GM12878 (cell line): ENCODE measurements at regions of chr9 and their contacts with region 1.

Region 1: GRCh38 chr9:128552153-128552743 is at the start of gene SPTAN1:
- DNase-seq: peak; percentile 60
- ATAC-seq: peak; percentile 85
- H3K4me3 ChIP-seq: peak within 1 kb of the TSS; percentile 92
- H3K27ac ChIP-seq: peak within 1 kb of the TSS; percentile 60
- H3K4me1 ChIP-seq: peaks cover 23% of the 10 kb centered on the region
- H3K27me3 ChIP-seq: no peaks in the 10 kb centered on the region
- CTCF ChIP-seq: peak in 1 of 3 experiments; percentile 20; a peak in 1 of 6 replicates
- EP300 ChIP-seq: no peak
- POLR2A ChIP-seq: peak; percentile 99
- RAD21 ChIP-seq: no peak
- polyA plus RNA-seq, gene SPTAN1: 18.7 to 46.9 TPM

Region 2: DNA sequence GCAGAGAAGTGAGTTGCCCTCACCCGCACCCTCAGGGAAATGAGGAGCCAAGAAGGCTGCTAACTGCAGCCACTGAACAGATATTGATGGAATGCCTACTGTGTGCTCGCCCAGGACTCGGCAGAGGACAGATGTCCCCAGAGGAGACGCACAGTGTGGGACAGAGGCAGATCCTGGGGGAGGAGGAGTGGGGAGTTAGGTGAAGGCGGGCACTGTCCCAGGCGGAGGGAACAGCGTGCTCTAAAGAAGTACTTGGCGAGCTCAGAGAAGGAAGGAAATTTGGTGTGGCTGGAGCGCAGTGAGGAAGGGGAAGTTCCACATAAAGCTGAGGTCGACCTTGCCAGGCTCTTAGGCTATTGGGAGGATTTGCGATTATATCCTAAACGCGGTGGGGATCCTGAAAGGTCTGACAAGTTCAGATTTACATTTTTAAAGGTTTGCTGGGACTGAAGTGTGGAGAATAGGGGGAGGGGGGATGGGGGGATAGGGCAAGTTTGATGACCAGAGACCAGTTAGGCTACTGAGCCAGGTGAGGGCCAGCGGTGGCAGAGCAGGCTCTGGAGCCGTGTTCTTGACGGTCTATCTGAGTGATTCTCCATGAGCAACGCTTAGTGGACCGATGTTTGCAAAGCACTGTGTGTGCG is 155.2 kb before region 1 on chr9:
- CTCF ChIA-PET with region 1: no interaction called
- POLR2A ChIA-PET with region 1: no interaction called
- RAD21 ChIA-PET with region 1: no interaction called
- SMC1A ChIA-PET with region 1: no interaction called
- in situ Hi-C with region 1: no loop called
- intact Hi-C with region 1: no loop called
- DNase-seq: no peak
- ATAC-seq: no peak; the same call in 2 of the 3 replicates
- H3K4me3 ChIP-seq: no peak overlapping the region
- H3K27ac ChIP-seq: no peak overlapping the region
- H3K4me1 ChIP-seq: no peaks in the 10 kb centered on the region
- H3K27me3 ChIP-seq: no peaks in the 10 kb centered on the region; a peak in 1 of 4 replicates
- CTCF ChIP-seq: no peak
- EP300 ChIP-seq: no peak
- POLR2A ChIP-seq: no peak
- RAD21 ChIP-seq: no peak

Region 3: GRCh38 chr9:128438343-128439109 is 113.7 kb before region 1 on chr9:
- CTCF ChIA-PET with region 1: interaction called, 6 read pairs
- POLR2A ChIA-PET with region 1: interaction called, 10 read pairs
- RAD21 ChIA-PET with region 1: interaction called, 4 read pairs
- SMC1A ChIA-PET with region 1: interaction called, 3 read pairs
- in situ Hi-C with region 1: no loop called
- intact Hi-C with region 1: no loop called
- DNase-seq: no peak
- ATAC-seq: peak; percentile 99
- H3K4me3 ChIP-seq: no peak overlapping the region
- H3K27ac ChIP-seq: no peak overlapping the region
- H3K4me1 ChIP-seq: no peaks in the 10 kb centered on the region
- H3K27me3 ChIP-seq: no peaks in the 10 kb centered on the region
- CTCF ChIP-seq: peak; percentile 86 to 96 (median 94)
- EP300 ChIP-seq: no peak
- POLR2A ChIP-seq: no peak
- RAD21 ChIP-seq: peak; percentile 72

Region 4: DNA sequence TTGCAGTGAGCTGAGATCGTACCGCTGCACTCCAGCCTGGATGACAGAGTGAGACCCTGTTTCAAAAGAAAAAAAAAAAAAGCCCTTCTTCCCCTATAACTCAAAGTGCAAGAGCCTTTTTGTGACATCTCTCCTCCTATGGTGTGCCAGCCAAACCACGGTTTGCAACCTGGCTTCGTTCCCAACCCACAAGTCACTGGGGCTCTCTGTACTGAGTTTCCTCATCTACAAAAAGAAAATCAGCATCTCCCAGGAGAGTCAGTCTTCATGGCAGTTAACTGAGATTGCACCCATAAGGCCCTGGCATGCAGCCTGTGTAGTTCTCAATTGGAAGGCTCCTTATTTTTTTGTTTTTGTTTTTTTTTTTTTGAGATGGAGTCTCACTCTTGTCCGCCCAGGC is 81.7 kb before region 1 on chr9:
- CTCF ChIA-PET with region 1: no interaction called
- POLR2A ChIA-PET with region 1: no interaction called
- RAD21 ChIA-PET with region 1: no interaction called
- SMC1A ChIA-PET with region 1: no interaction called
- in situ Hi-C with region 1: no loop called
- intact Hi-C with region 1: no loop called
- DNase-seq: no peak
- ATAC-seq: no peak; the same call in 2 of the 3 replicates
- H3K4me3 ChIP-seq: no peak overlapping the region
- H3K27ac ChIP-seq: no peak overlapping the region
- H3K4me1 ChIP-seq: no peaks in the 10 kb centered on the region
- H3K27me3 ChIP-seq: no peaks in the 10 kb centered on the region
- CTCF ChIP-seq: no peak
- EP300 ChIP-seq: no peak
- POLR2A ChIP-seq: no peak
- RAD21 ChIP-seq: no peak

Region 5: GRCh38 chr9:128504485-128505413 is 47.5 kb before region 1 on chr9 and contains the start of gene GLE1:
- CTCF ChIA-PET with region 1: interaction called, 3 read pairs
- POLR2A ChIA-PET with region 1: interaction called, 19 read pairs
- RAD21 ChIA-PET with region 1: interaction called, 11 read pairs
- SMC1A ChIA-PET with region 1: interaction called, 20 read pairs
- in situ Hi-C with region 1: no loop called
- intact Hi-C with region 1: loop called (anchors 5 kb)
- DNase-seq: peak; percentile 82
- ATAC-seq: peak; percentile 98
- H3K4me3 ChIP-seq: peak within 1 kb of the TSS; percentile 97
- H3K27ac ChIP-seq: peak within 1 kb of the TSS; percentile 74
- H3K4me1 ChIP-seq: peaks cover 10% of the 10 kb centered on the region; the same call in 1 of the 2 replicates
- H3K27me3 ChIP-seq: no peaks in the 10 kb centered on the region
- CTCF ChIP-seq: no peak
- EP300 ChIP-seq: no peak
- POLR2A ChIP-seq: peak; percentile 87
- RAD21 ChIP-seq: no peak
- polyA plus RNA-seq, gene GLE1: 17.4 to 18.6 TPM

Region 6: GRCh38 chr9:128512820-128513219 is 39.4 kb before region 1 on chr9:
- CTCF ChIA-PET with region 1: interaction called, 10 read pairs
- POLR2A ChIA-PET with region 1: interaction called, 16 read pairs
- RAD21 ChIA-PET with region 1: interaction called, 9 read pairs
- SMC1A ChIA-PET with region 1: interaction called, 11 read pairs
- in situ Hi-C with region 1: no loop called
- intact Hi-C with region 1: loop called (anchors 5 kb)
- DNase-seq: no peak
- ATAC-seq: no peak
- H3K4me3 ChIP-seq: no peak overlapping the region
- H3K27ac ChIP-seq: no peak overlapping the region
- H3K4me1 ChIP-seq: no peaks in the 10 kb centered on the region
- H3K27me3 ChIP-seq: no peaks in the 10 kb centered on the region
- CTCF ChIP-seq: no peak
- EP300 ChIP-seq: no peak
- POLR2A ChIP-seq: no peak
- RAD21 ChIP-seq: no peak

Region 7: GRCh38 chr9:128688512-128689292 is 136.5 kb after region 1 on chr9 and contains the start of gene SET:
- CTCF ChIA-PET with region 1: no interaction called
- POLR2A ChIA-PET with region 1: interaction called, 8 read pairs
- RAD21 ChIA-PET with region 1: interaction called, 5 read pairs
- SMC1A ChIA-PET with region 1: interaction called, 3 read pairs
- in situ Hi-C with region 1: no loop called
- intact Hi-C with region 1: loop called (anchors 10 kb)
- DNase-seq: peak; percentile 73
- ATAC-seq: peak; percentile 76
- H3K4me3 ChIP-seq: peak within 1 kb of the TSS; percentile 100
- H3K27ac ChIP-seq: peak within 1 kb of the TSS; percentile 81
- H3K4me1 ChIP-seq: peaks cover 13% of the 10 kb centered on the region; the same call in 1 of the 2 replicates
- H3K27me3 ChIP-seq: no peaks in the 10 kb centered on the region
- CTCF ChIP-seq: no peak
- EP300 ChIP-seq: no peak
- POLR2A ChIP-seq: peak; percentile 90
- RAD21 ChIP-seq: no peak
- polyA plus RNA-seq, gene SET: 314 to 450 TPM